Naive thymus-derived CD4-positive, alpha-beta T cell (primary cell): ENCODE measurements at regions of chr20 and their contacts with region 1.

Region 1: GRCh38 chr20:22691369-22692118 is 107.2 kb upstream of the FOXA2 start:
- DNase-seq: peak in 6 of 9 donors; percentile 10 to 47 (median 37)
- ATAC-seq: peak; percentile 68
- H3K4me3 ChIP-seq: no peak overlapping the region
- H3K4me3 Mint-ChIP-seq: no peak overlapping the region
- H3K27ac ChIP-seq: no peak overlapping the region
- H3K27ac Mint-ChIP-seq: no peak overlapping the region
- H3K4me1 ChIP-seq: no peaks in the 10 kb centered on the region
- H3K4me1 Mint-ChIP-seq: no peaks in the 10 kb centered on the region
- H3K27me3 ChIP-seq: no peaks in the 10 kb centered on the region
- H3K27me3 Mint-ChIP-seq: peaks cover 0 to 24% (median 12%) of the 10 kb centered on the region in 5 donors

Region 2: DNA sequence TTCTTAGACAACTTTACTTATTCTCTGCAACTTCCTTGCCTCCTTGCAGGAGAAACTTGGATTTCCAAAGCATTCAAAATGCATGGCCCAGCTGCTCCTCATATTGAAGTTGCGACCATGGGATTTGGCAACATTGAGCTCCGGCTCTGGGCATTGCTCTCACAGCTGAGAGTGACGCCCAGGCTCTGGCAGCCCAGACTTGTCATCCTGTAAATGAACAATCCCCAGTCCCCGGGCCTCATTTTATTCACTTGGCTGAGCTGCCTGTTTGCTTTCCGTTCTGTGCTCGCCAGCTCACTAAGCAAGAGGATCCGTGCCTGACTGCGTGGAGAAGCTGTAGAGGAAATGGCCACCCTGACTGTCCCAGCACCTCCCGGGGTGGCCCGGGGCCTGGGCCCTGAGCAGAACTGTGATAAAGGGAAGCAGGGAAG is 514.1 kb after region 1 on chr20:
- CTCF ChIA-PET with region 1: no interaction called
- POLR2A ChIA-PET with region 1: no interaction called
- intact Hi-C with region 1: no loop called
- DNase-seq: no peak
- ATAC-seq: no peak
- H3K4me3 ChIP-seq: no peak overlapping the region
- H3K4me3 Mint-ChIP-seq: no peak overlapping the region
- H3K27ac ChIP-seq: no peak overlapping the region
- H3K27ac Mint-ChIP-seq: no peak overlapping the region
- H3K4me1 ChIP-seq: no peaks in the 10 kb centered on the region
- H3K4me1 Mint-ChIP-seq: no peaks in the 10 kb centered on the region
- H3K27me3 ChIP-seq: no peaks in the 10 kb centered on the region
- H3K27me3 Mint-ChIP-seq: peaks cover 17 to 30% (median 22%) of the 10 kb centered on the region in 5 donors

Region 3: GRCh38 chr20:23235173-23236027 is 543.9 kb after region 1 on chr20:
- CTCF ChIA-PET with region 1: no interaction called
- POLR2A ChIA-PET with region 1: no interaction called
- intact Hi-C with region 1: loop called in 1 of 2 experiments (anchors 1 kb)
- DNase-seq: peak in 2 of 9 donors; percentile 18 to 51
- ATAC-seq: peak; percentile 67
- H3K4me3 ChIP-seq: no peak overlapping the region
- H3K4me3 Mint-ChIP-seq: no peak overlapping the region
- H3K27ac ChIP-seq: no peak overlapping the region
- H3K27ac Mint-ChIP-seq: no peak overlapping the region
- H3K4me1 ChIP-seq: no peaks in the 10 kb centered on the region
- H3K4me1 Mint-ChIP-seq: peaks cover 0 to 4% (median 0%) of the 10 kb centered on the region in 7 donors
- H3K27me3 ChIP-seq: no peaks in the 10 kb centered on the region
- H3K27me3 Mint-ChIP-seq: peaks cover 8 to 26% (median 9%) of the 10 kb centered on the region in 5 donors

Region 4: GRCh38 chr20:23245553-23246181 is 554.1 kb after region 1 on chr20:
- CTCF ChIA-PET with region 1: no interaction called
- POLR2A ChIA-PET with region 1: no interaction called
- intact Hi-C with region 1: loop called in 1 of 2 experiments (anchors 2 kb)
- DNase-seq: peak in 1 of 9 donors; percentile 1
- ATAC-seq: peak; percentile 83
- H3K4me3 ChIP-seq: no peak overlapping the region
- H3K4me3 Mint-ChIP-seq: no peak overlapping the region
- H3K27ac ChIP-seq: no peak overlapping the region
- H3K27ac Mint-ChIP-seq: no peak overlapping the region
- H3K4me1 ChIP-seq: no peaks in the 10 kb centered on the region
- H3K4me1 Mint-ChIP-seq: peaks cover 0 to 6% (median 0%) of the 10 kb centered on the region in 7 donors
- H3K27me3 ChIP-seq: no peaks in the 10 kb centered on the region
- H3K27me3 Mint-ChIP-seq: peaks cover 0 to 27% (median 11%) of the 10 kb centered on the region in 5 donors

Region 5: GRCh38 chr20:23435626-23436539 is 744.3 kb after region 1 on chr20:
- CTCF ChIA-PET with region 1: no interaction called
- POLR2A ChIA-PET with region 1: no interaction called
- intact Hi-C with region 1: loop called in 1 of 2 experiments (anchors 10 kb)
- DNase-seq: no peak
- ATAC-seq: no peak
- H3K4me3 ChIP-seq: no peak overlapping the region
- H3K4me3 Mint-ChIP-seq: no peak overlapping the region
- H3K27ac ChIP-seq: no peak overlapping the region
- H3K27ac Mint-ChIP-seq: no peak overlapping the region
- H3K4me1 ChIP-seq: no peaks in the 10 kb centered on the region
- H3K4me1 Mint-ChIP-seq: no peaks in the 10 kb centered on the region
- H3K27me3 ChIP-seq: no peaks in the 10 kb centered on the region
- H3K27me3 Mint-ChIP-seq: peaks cover 0 to 14% (median 0%) of the 10 kb centered on the region in 5 donors

Region 6: GRCh38 chr20:23606652-23607049 is 915.1 kb after region 1 on chr20:
- CTCF ChIA-PET with region 1: no interaction called
- POLR2A ChIA-PET with region 1: no interaction called
- intact Hi-C with region 1: loop called in 1 of 2 experiments (anchors 10 kb)
- DNase-seq: peak; percentile 15 to 63 (median 39)
- ATAC-seq: peak; percentile 86
- H3K4me3 ChIP-seq: no peak overlapping the region
- H3K4me3 Mint-ChIP-seq: no peak overlapping the region
- H3K27ac ChIP-seq: no peak overlapping the region
- H3K27ac Mint-ChIP-seq: no peak overlapping the region
- H3K4me1 ChIP-seq: no peaks in the 10 kb centered on the region
- H3K4me1 Mint-ChIP-seq: peaks cover 0 to 4% (median 0%) of the 10 kb centered on the region in 7 donors
- H3K27me3 ChIP-seq: no peaks in the 10 kb centered on the region
- H3K27me3 Mint-ChIP-seq: peaks cover 4 to 7% (median 5%) of the 10 kb centered on the region in 5 donors